HepG2 (cell line): ENCODE measurements at regions of chr17 and their contacts with region 1.

Region 1: DNA sequence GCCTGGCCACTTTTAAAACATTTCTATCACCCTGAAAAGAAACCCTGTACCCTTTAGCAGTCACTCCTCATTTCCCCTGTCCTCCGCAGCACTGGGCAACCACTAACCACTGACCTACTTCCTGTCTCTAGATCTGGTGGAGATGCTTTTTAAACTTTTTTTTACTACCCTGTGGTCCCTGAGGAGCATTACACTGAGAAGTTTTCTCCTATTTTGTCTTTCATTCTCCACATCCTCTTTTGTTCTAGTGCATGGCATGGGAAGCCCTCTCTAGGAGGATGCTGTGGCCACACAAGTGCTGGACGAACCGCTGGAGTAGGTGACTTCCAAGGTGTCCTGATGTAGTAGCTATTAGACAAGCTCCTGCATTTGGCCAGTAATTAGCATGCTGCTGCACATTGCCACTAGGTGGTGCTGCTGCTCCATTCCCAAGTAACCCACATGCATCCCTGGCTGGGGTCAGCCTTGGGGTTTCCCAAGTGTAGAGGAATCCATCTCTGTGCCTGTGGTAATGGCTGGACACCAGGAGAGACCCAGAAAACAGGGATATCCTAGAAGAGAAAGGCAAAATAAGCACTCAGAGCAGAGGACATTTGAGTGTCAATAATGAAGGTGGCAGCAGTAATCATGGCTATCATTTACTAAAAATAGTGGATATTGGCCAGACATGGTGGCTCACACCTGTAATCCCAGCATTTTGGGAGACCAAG is 143.8 kb upstream of the CRHR1 start:
- DNase-seq: peak; percentile 81
- ATAC-seq: peak; percentile 95
- H3K4me3 ChIP-seq: no peak overlapping the region
- H3K27ac ChIP-seq: no peak overlapping the region
- H3K4me1 ChIP-seq: no peaks in the 10 kb centered on the region
- H3K27me3 ChIP-seq: no peaks in the 10 kb centered on the region
- CTCF ChIP-seq: peak; percentile 98
- EP300 ChIP-seq: peak in 1 of 2 experiments; percentile 7; a peak in 1 of 4 replicates
- POLR2A ChIP-seq: no peak
- RAD21 ChIP-seq: peak; percentile 94

Region 2: DNA sequence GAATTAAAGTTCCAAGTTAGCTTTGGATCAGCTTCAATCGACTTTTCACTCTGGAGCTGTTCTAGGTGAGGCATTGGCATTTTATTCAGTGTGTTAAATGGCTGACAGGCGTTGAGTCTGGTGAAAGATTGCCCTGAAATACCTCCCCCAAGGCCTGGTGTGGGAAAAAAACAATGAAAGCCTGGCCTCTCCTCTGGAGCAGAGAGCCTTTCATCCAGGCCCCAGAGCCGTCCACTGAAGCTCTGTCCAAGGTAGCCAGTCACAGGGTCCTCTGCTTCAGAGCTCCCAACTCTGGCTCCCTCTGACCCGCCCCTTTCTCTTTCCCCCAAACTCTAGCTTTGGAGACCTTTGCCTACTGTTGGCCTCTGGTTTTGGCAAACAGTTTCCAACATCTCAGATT is 20.2 kb after region 1 on chr17:
- CTCF ChIA-PET with region 1: no interaction called
- POLR2A ChIA-PET with region 1: no interaction called
- in situ Hi-C with region 1: no loop called
- intact Hi-C with region 1: no loop called
- DNase-seq: no peak
- ATAC-seq: peak; percentile 51; the same call in 2 of the 3 replicates
- H3K4me3 ChIP-seq: no peak overlapping the region
- H3K27ac ChIP-seq: no peak overlapping the region
- H3K4me1 ChIP-seq: no peaks in the 10 kb centered on the region
- H3K27me3 ChIP-seq: peaks cover 0 to 55% of the 10 kb centered on the region in 2 experiments; a peak in 4 of 5 replicates
- CTCF ChIP-seq: no peak
- EP300 ChIP-seq: no peak
- POLR2A ChIP-seq: no peak
- RAD21 ChIP-seq: no peak

Region 3: GRCh38 chr17:45834471-45835396 is 194.4 kb after region 1 on chr17:
- CTCF ChIA-PET with region 1: interaction called, 65 read pairs
- POLR2A ChIA-PET with region 1: interaction called, 7 read pairs
- in situ Hi-C with region 1: loop called (anchors 5 kb)
- intact Hi-C with region 1: loop called (anchors 2 kb)
- DNase-seq: no peak
- ATAC-seq: no peak
- H3K4me3 ChIP-seq: no peak overlapping the region
- H3K27ac ChIP-seq: no peak overlapping the region
- H3K4me1 ChIP-seq: no peaks in the 10 kb centered on the region
- H3K27me3 ChIP-seq: peaks cover 19 to 85% of the 10 kb centered on the region in 2 experiments
- CTCF ChIP-seq: no peak
- EP300 ChIP-seq: no peak
- POLR2A ChIP-seq: no peak
- RAD21 ChIP-seq: no peak